ENCODE measurements at regions of chr14 and their contacts with region 1.

Region 1: GRCh38 chr14:72049455-72049854 is 117.2 kb downstream of the RGS6 start:
- DNase-seq: peak; percentile 56
- H3K4me3 Mint-ChIP-seq: no peak overlapping the region
- H3K27ac Mint-ChIP-seq: no peak overlapping the region
- H3K4me1 Mint-ChIP-seq: peaks cover 12% of the 10 kb centered on the region
- H3K27me3 Mint-ChIP-seq: peaks cover 38% of the 10 kb centered on the region

Region 2: GRCh38 chr14:71967704-71968103 is 81.8 kb before region 1 on chr14:
- CTCF ChIA-PET with region 1: no interaction called
- intact Hi-C with region 1: loop called (anchors 5 kb)
- DNase-seq: no peak
- H3K4me3 Mint-ChIP-seq: no peak overlapping the region
- H3K27ac Mint-ChIP-seq: no peak overlapping the region
- H3K4me1 Mint-ChIP-seq: peaks cover 7% of the 10 kb centered on the region
- H3K27me3 Mint-ChIP-seq: peaks cover 9% of the 10 kb centered on the region

Region 3: DNA sequence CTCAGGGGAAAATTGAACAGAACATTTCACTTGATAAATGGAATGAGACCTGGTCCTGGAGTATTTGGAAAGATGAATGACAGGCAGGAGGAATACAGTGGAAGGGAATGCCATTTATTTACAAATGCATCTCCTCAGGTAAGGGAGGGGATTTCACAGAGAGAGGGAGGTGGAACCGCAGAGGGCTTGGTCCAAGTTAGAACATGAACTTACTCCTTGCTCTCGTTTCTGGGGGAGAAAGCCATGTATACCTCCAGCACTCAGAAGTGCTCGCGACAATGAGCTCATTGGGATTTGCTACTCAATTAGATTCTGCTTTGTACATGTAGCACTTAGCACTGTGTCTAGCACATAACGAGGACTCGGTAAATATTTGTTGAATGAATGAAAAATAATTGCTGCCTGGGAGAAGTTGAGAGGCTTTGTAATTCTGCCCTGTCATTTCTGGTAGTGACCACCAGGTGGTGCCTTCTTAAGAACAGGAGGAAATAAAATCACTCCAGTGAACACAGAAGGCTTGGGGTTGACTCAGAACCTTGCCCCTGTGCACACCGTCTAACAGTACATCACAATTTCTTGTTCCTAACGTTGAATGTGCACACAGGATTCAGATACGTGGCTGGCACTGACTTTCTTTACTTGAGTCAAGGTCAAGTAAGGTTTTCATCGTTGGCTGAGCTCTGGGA is 25.6 kb before region 1 on chr14:
- CTCF ChIA-PET with region 1: interaction called, 9 read pairs
- intact Hi-C with region 1: loop called (anchors 2 kb)
- DNase-seq: peak; percentile 69
- H3K4me3 Mint-ChIP-seq: no peak overlapping the region
- H3K27ac Mint-ChIP-seq: no peak overlapping the region
- H3K4me1 Mint-ChIP-seq: peaks cover 6% of the 10 kb centered on the region
- H3K27me3 Mint-ChIP-seq: peaks cover 12% of the 10 kb centered on the region

Region 4: DNA sequence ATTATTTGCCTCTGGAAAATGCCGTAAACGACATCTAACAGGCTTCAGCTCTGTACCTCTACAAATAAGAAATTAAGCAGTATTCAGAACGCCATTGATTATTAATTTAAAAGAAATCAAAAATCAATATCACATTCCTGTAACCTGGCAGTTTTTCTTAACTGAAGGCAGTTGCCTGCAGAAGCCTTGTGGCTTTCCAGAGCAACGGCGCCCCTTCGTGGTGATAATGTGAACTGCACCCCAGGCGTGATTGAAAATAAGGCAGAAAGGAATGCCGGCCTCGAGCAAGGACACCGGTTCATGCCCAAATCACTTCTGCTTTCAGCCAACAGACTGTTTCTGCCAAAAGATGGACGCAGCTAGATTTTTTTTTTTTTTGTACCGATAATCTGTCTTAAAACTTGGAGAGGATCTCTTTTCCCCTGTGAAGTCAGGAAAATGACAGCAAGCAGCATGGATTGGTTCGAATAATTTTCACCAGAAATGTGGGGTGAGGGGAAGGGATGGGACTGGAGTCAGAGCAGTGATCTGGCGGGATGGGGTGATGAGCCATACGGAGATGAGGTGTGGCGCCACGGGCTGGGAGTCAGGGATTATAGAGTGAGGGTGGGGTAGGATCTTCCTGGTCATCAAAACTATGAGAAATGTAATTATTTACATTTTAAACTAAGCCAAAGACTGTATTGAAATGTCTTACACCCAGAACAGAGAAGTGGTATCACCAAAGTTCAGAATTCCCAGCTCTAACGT is 371.4 kb after region 1 on chr14:
- CTCF ChIA-PET with region 1: no interaction called
- intact Hi-C with region 1: no loop called
- DNase-seq: peak; percentile 91
- H3K4me3 Mint-ChIP-seq: no peak overlapping the region
- H3K27ac Mint-ChIP-seq: no peak overlapping the region
- H3K4me1 Mint-ChIP-seq: peaks cover 2% of the 10 kb centered on the region
- H3K27me3 Mint-ChIP-seq: peaks cover 2% of the 10 kb centered on the region

Measured in activated naive CD4-positive, alpha-beta T cell treated with anti-CD3 and anti-CD28 coated beads for 36 hours (primary cell).